HepG2 (cell line): ENCODE measurements at regions of chr12 and their contacts with region 1.

Region 1: GRCh38 chr12:118120579-118121363 is 15.2 kb upstream of the PEBP1 start:
- DNase-seq: peak; percentile 91
- ATAC-seq: peak; percentile 80
- H3K4me3 ChIP-seq: no peak overlapping the region; a peak in 1 of 6 replicates
- H3K27ac ChIP-seq: peak overlapping the region; percentile 90
- H3K4me1 ChIP-seq: peaks cover 67% of the 10 kb centered on the region
- H3K27me3 ChIP-seq: no peaks in the 10 kb centered on the region
- CTCF ChIP-seq: peak; percentile 73
- EP300 ChIP-seq: peak in 1 of 2 experiments; percentile 66; a peak in 2 of 4 replicates
- POLR2A ChIP-seq: no peak
- RAD21 ChIP-seq: peak; percentile 70

Region 2: DNA sequence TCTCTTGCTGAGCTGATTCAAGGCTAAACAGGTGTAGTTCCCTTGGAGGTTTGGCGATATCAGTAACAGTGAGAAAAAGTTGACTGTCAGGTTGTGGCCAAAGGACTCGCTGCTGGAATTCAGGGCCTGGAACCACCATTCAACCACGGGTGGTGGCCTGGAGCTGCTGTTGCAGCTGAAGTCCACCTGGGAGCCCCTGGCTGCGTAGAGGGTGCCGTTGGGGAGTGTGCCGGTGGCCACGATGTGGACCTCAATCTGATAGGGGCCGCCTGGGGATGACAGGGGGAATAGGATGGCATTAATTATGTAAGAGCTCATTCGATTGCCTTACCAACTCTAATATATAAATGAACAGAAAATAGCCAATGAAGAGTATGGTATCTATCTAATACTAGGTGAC is 38.6 kb before region 1 on chr12:
- CTCF ChIA-PET with region 1: no interaction called
- POLR2A ChIA-PET with region 1: no interaction called
- in situ Hi-C with region 1: no loop called
- intact Hi-C with region 1: no loop called
- DNase-seq: no peak
- ATAC-seq: no peak
- H3K4me3 ChIP-seq: no peak overlapping the region
- H3K27ac ChIP-seq: no peak overlapping the region
- H3K4me1 ChIP-seq: no peaks in the 10 kb centered on the region
- H3K27me3 ChIP-seq: no peaks in the 10 kb centered on the region
- CTCF ChIP-seq: no peak
- EP300 ChIP-seq: no peak
- POLR2A ChIP-seq: no peak
- RAD21 ChIP-seq: no peak

Region 3: DNA sequence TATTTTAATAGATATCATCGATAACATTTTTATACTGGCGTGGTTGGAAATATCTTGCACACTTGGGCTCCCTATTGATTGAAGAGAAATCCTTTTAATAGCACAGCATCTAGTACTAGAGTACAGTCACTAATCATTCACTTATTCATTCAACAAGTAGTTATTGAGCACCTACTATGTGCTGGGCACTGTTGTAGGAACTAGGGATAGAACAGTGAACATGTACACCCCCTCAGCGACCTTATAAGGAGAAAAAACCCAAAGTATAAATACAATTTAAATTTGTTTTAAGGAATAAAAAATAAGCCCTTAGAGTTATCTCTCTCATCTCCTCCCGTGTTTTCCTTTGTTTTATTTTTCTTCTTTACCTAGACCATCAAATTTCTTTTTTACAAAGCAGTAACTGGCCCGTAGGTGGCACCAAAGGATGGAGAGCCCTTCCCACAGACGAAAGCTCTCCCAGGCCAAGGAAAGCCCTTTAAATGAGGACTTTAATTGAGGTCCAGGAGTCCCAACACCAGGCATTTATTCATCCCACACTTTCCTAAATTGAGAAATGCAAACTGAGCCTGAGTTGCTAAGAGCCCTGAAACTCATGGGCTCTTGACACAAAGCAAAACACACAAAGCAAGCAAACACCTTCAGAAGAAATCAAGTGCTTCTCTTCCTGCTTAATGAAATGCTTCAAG is 44.2 kb after region 1 on chr12:
- CTCF ChIA-PET with region 1: interaction called, 6 read pairs
- POLR2A ChIA-PET with region 1: no interaction called
- in situ Hi-C with region 1: no loop called
- intact Hi-C with region 1: loop called (anchors 2 kb)
- DNase-seq: peak; percentile 10
- ATAC-seq: peak; percentile 47; the same call in 1 of the 3 replicates
- H3K4me3 ChIP-seq: no peak overlapping the region
- H3K27ac ChIP-seq: no peak overlapping the region
- H3K4me1 ChIP-seq: no peaks in the 10 kb centered on the region
- H3K27me3 ChIP-seq: no peaks in the 10 kb centered on the region
- CTCF ChIP-seq: peak; percentile 44
- EP300 ChIP-seq: no peak
- POLR2A ChIP-seq: no peak
- RAD21 ChIP-seq: no peak

Region 4: DNA sequence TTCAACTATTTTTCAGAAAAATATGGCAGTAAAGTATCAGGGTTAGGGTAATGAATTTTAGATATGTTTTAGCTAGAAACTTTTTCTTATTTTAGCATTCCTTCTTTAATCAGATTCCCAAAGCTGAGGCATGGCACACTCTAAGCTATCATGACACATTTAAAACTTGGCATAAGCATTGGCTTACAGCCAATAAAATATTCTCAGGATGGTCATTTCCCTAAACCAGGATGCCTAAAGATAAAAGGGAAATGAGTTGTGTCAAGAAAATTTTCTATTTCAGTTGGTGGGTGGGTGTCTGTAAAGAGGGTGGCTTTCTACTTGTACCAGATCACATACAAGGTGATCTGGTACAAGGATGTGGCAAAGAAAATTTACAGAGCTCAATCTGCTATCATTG is 62.9 kb after region 1 on chr12:
- CTCF ChIA-PET with region 1: interaction called, 4 read pairs
- POLR2A ChIA-PET with region 1: no interaction called
- in situ Hi-C with region 1: no loop called
- intact Hi-C with region 1: loop called (anchors 2 kb)
- DNase-seq: no peak
- ATAC-seq: no peak
- H3K4me3 ChIP-seq: no peak overlapping the region
- H3K27ac ChIP-seq: no peak overlapping the region
- H3K4me1 ChIP-seq: peaks cover 6% of the 10 kb centered on the region; the same call in 1 of the 2 replicates
- H3K27me3 ChIP-seq: no peaks in the 10 kb centered on the region
- CTCF ChIP-seq: no peak
- EP300 ChIP-seq: no peak
- POLR2A ChIP-seq: no peak
- RAD21 ChIP-seq: no peak

Region 5: GRCh38 chr12:118372541-118373495 is 252.0 kb after region 1 on chr12 and contains the start of gene TAOK3:
- CTCF ChIA-PET with region 1: interaction called, 6 read pairs
- POLR2A ChIA-PET with region 1: interaction called, 20 read pairs
- in situ Hi-C with region 1: loop called (anchors 5 kb)
- intact Hi-C with region 1: loop called (anchors 2 kb)
- DNase-seq: peak; percentile 98
- ATAC-seq: peak; percentile 86
- H3K4me3 ChIP-seq: peak within 1 kb of the TSS; percentile 91 to 95 (median 94)
- H3K27ac ChIP-seq: peak within 1 kb of the TSS; percentile 97
- H3K4me1 ChIP-seq: peaks cover 35% of the 10 kb centered on the region
- H3K27me3 ChIP-seq: no peaks in the 10 kb centered on the region; a peak in 1 of 5 replicates
- CTCF ChIP-seq: no peak
- EP300 ChIP-seq: peak in 1 of 2 experiments; percentile 36; a peak in 2 of 4 replicates
- POLR2A ChIP-seq: peak; percentile 91 to 97
- RAD21 ChIP-seq: peak; percentile 38; the same call in 1 of the 2 replicates
- total RNA-seq, gene TAOK3: 12.3 and 16.5 TPM in 2 replicates